ENCODE measurements at regions of chr12 and their contacts with region 1.

Region 1: DNA sequence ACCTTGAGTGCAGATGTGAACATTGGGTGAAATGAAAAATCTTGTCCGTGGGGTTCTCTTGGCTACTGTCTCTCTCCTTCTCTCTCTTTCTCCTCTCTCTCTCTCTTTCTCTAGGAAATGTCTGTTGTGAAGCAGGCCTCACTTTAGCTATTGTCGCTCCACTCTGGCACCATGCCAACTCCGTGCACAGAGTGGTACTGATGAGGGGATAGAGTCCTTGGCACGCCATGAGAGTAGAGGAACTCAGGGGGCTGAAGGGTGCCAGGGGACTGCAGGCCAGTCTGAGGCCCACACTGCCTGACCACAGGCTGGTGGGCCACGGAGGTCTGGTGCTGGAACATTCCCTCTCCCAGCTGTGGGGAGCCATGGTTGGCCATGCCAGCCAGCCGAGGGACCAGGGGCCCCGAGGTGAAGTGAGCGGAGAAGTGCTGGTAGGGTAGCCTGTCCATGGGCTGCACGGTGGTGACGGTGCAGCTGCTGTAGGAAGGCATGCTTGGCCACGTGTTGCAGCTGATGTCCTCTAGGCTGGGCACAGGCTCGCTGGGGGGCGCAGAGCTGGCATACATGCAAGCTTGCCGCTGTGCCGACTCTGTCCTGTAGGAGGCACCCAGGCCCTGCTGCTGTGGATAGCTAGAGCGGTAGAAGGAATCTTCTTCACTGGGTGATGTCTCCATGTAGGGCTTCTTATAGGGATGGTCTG is 50.4 kb downstream of the TBX5 start:
- DNase-seq: peak in 1 of 2 experiments; percentile 87
- H3K4me3 ChIP-seq: no peak overlapping the region
- H3K27ac ChIP-seq: no peak overlapping the region
- H3K4me1 ChIP-seq: peaks cover 0 to 2% (median 0%) of the 10 kb centered on the region in 4 experiments; a peak in 2 of 7 replicates
- H3K27me3 ChIP-seq: no peaks in the 10 kb centered on the region; a peak in 1 of 7 replicates
- CTCF ChIP-seq: peak; percentile 82 to 97 (median 94)
- EP300 ChIP-seq: no peak
- POLR2A ChIP-seq: no peak
- RAD21 ChIP-seq: peak; percentile 82 to 87

Region 2: GRCh38 chr12:114054982-114055381 is 300.6 kb before region 1 on chr12:
- CTCF ChIA-PET with region 1: no interaction called
- POLR2A ChIA-PET with region 1: no interaction called
- DNase-seq: no peak
- H3K4me3 ChIP-seq: no peak overlapping the region
- H3K27ac ChIP-seq: no peak overlapping the region
- H3K4me1 ChIP-seq: no peaks in the 10 kb centered on the region
- H3K27me3 ChIP-seq: no peaks in the 10 kb centered on the region
- CTCF ChIP-seq: no peak
- EP300 ChIP-seq: no peak
- POLR2A ChIP-seq: no peak
- RAD21 ChIP-seq: no peak

Region 3: DNA sequence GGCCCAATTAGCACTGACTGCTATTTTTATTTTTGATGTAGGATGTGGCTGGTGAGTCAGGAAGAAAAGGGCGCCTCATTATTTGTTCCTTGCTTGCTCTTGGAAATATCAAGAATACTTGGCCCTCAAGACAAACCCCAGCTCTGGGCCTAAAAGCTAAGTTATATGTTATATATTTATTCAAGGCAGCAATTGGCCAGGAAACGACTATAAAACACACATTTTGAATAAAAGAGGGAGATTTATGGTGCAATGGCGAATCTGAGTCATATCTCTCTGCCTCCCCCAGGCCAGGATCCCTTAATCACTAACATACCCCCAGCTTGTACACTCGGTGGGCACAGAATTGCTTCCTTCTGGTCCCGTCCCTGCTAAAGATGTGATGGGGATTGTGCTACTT is 12.9 kb before region 1 on chr12:
- CTCF ChIA-PET with region 1: interaction called, 31 read pairs
- POLR2A ChIA-PET with region 1: no interaction called
- DNase-seq: no peak
- H3K4me3 ChIP-seq: no peak overlapping the region
- H3K27ac ChIP-seq: no peak overlapping the region
- H3K4me1 ChIP-seq: peaks cover 0 to 4% (median 0%) of the 10 kb centered on the region in 4 experiments; a peak in 1 of 7 replicates
- H3K27me3 ChIP-seq: no peaks in the 10 kb centered on the region
- CTCF ChIP-seq: no peak
- EP300 ChIP-seq: no peak
- POLR2A ChIP-seq: no peak
- RAD21 ChIP-seq: no peak

Region 4: GRCh38 chr12:114368685-114369452 is 13.3 kb after region 1 on chr12:
- CTCF ChIA-PET with region 1: interaction called, 35 read pairs
- POLR2A ChIA-PET with region 1: no interaction called
- DNase-seq: no peak
- H3K4me3 ChIP-seq: no peak overlapping the region
- H3K27ac ChIP-seq: no peak overlapping the region
- H3K4me1 ChIP-seq: 0 out of 7 replicates have a peak, but pooled peaks cover 0 to 2% (median under 1%) of the 10 kb centered on the region in 4 experiments
- H3K27me3 ChIP-seq: no peaks in the 10 kb centered on the region
- CTCF ChIP-seq: no peak
- EP300 ChIP-seq: no peak
- POLR2A ChIP-seq: no peak
- RAD21 ChIP-seq: no peak

Region 5: DNA sequence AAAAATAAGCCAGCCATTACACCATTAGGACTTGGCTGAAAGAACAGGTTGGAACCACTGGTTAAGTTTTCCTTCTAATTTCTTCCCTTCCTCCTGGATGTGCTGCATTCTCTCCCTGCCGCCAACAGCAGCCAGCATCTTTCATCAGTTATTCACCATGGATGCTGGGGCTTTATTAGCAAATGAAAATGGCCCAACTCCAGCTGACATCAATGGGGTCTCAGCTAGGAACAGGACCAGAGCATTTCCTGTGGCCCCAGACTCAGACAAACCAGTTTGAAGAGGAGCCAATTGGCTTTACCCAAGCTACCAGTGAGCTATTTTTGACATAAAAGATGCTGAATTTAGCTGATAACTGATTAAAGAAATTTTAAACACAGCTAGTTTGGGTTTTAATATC is 76.4 kb after region 1 on chr12:
- CTCF ChIA-PET with region 1: no interaction called
- POLR2A ChIA-PET with region 1: no interaction called
- DNase-seq: no peak
- H3K4me3 ChIP-seq: no peak overlapping the region
- H3K27ac ChIP-seq: no peak overlapping the region
- H3K4me1 ChIP-seq: peaks cover 0 to 5% (median 0%) of the 10 kb centered on the region in 4 experiments; a peak in 1 of 7 replicates
- H3K27me3 ChIP-seq: peaks cover 6 to 18% (median 15%) of the 10 kb centered on the region in 4 experiments
- CTCF ChIP-seq: no peak
- EP300 ChIP-seq: no peak
- POLR2A ChIP-seq: no peak
- RAD21 ChIP-seq: no peak

Region 6: GRCh38 chr12:114476159-114476558 is 120.6 kb after region 1 on chr12:
- CTCF ChIA-PET with region 1: interaction called, 11 read pairs
- POLR2A ChIA-PET with region 1: no interaction called
- DNase-seq: no peak
- H3K4me3 ChIP-seq: no peak overlapping the region
- H3K27ac ChIP-seq: no peak overlapping the region
- H3K4me1 ChIP-seq: peaks cover 0 to 9% (median 0%) of the 10 kb centered on the region in 4 experiments; a peak in 2 of 7 replicates
- H3K27me3 ChIP-seq: peaks cover 21 to 45% (median 40%) of the 10 kb centered on the region in 4 experiments
- CTCF ChIP-seq: peak in 2 of 3 experiments; percentile 50 to 79; a peak in 3 of 4 replicates
- EP300 ChIP-seq: no peak
- POLR2A ChIP-seq: no peak
- RAD21 ChIP-seq: peak; percentile 68 to 73